ENCODE measurements at regions of chr20 and their contacts with region 1.

Region 1: GRCh38 chr20:62065669-62066338 is at the start of gene TAF4:
- DNase-seq: peak; percentile 81
- H3K4me3 ChIP-seq: peak within 1 kb of the TSS; percentile 58 to 73 (median 67)
- H3K27ac ChIP-seq: peak within 1 kb of the TSS; percentile 89 to 96 (median 92)
- H3K4me1 ChIP-seq: peaks cover 41 to 64% (median 49%) of the 10 kb centered on the region in 4 donors
- H3K27me3 ChIP-seq: no peaks in the 10 kb centered on the region
- CTCF ChIP-seq: no peak
- EP300 ChIP-seq: no peak
- POLR2A ChIP-seq: peak; percentile 1
- total RNA-seq, gene TAF4: 18.9 to 39.5 (median 24.3) TPM

Region 2: DNA sequence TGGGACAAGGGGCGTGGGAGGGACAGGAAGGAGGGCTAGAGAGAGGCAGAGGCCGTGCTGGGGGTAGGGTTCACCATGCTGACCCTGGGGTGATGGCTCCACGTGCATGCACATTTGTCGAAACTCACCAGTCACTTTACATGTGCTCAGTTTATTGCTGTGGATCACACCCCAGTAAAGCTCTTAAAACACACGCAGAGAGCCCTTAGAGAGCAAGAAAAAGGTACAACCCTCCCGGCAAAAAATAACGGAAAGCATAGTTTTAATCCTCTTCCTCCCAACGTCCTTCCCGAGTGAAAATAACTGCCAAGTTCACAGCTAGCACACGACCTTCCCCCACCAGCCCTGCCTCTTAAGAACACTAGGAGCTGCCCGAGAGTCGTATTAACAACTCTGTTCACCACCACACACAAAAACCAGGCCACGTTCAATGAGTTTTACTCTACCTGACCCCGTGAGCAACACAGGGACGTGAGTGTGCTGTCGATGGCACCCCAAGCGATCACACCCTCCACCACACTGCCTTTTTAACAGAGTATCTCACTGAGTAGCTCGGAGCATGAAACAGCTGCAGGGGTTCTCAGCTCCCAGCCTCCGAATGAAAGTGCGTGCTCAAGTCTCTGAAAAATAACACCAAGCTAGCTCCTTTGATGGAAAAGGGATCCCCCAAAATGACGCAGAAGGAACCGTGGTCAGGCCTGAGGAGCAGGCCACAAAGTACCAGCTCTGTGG is 39.8 kb before region 1 on chr20:
- in situ Hi-C with region 1: no loop called
- intact Hi-C with region 1: loop called (anchors 5 kb)
- DNase-seq: no peak
- H3K4me3 ChIP-seq: no peak overlapping the region
- H3K27ac ChIP-seq: no peak overlapping the region
- H3K4me1 ChIP-seq: peaks cover 2 to 20% (median 9%) of the 10 kb centered on the region in 4 donors
- H3K27me3 ChIP-seq: no peaks in the 10 kb centered on the region
- CTCF ChIP-seq: peak; percentile 16 to 37 (median 30)
- EP300 ChIP-seq: no peak
- POLR2A ChIP-seq: no peak

Region 3: GRCh38 chr20:62121776-62122631 is 56.2 kb after region 1 on chr20 and contains the start of gene LSM14B:
- in situ Hi-C with region 1: loop called in 2 of 4 experiments (anchors 10 kb)
- intact Hi-C with region 1: loop called (anchors 5 kb)
- DNase-seq: peak; percentile 97
- H3K4me3 ChIP-seq: peak within 1 kb of the TSS; percentile 61 to 96 (median 74)
- H3K27ac ChIP-seq: peak within 1 kb of the TSS; percentile 95 to 98 (median 96)
- H3K4me1 ChIP-seq: peaks cover 11 to 25% (median 23%) of the 10 kb centered on the region in 4 donors
- H3K27me3 ChIP-seq: no peaks in the 10 kb centered on the region
- CTCF ChIP-seq: no peak
- EP300 ChIP-seq: no peak
- POLR2A ChIP-seq: peak; percentile 50
- total RNA-seq, gene LSM14B: 22.1 to 45.3 (median 35.6) TPM